ENCODE measurements at regions of chr6 and their contacts with region 1.

Region 1: DNA sequence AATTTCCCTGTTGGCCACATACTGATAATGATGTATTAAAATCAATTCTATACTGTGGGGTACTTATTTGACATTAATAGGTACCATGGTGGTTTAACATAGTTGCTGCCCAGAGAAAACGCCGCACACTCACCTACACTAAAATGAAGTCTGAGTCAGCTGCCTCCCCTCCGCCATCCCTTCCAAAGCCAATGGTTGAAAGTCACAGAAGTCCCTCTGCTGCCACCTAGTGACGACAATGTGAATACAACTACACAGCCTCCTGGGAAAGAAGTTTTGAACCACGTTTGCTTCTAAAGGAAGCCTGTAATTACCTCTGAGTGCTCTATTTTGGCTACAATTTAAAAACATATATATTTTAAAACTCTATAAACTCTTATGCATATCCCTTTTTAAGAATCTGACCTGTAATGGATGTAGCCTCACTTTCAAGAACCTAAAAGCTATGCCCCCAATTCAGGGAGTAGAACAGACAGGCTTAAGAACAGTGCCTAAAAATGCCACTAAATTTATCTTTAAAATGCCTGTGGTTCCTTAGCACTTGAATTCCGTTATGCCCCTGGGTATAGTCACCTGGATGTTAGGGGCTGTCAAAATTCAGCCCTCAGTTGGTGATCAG is 20.6 kb upstream of the ECI2 start:
- DNase-seq: no peak

Region 2: DNA sequence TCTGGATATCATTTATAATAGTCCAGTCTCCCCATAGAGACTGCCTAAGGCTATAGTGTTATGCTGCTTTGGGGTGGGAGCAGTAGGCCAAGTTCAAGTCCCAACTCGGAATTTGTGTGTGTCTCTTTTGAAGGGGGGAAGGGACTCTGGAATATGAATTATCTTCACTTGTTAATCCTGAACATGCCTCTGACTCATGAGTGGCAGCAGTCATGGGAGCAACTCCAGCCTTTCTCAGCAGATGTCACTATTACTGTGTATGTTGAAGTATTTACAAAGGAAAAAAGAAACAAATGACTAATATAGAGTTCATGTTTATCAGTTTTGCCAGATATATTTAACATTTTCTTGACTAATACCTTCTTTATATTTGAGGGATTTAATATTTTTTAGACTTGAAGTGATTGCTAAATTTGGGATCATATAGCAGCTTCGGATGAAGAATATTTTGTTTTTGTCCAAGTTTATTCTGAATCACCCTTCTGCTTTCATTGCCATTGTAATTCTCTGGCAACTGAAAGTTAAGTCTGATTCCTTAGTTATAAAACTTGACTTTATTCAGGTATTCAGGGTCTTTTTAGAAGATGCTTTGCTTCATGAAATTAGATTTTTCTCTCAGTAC is 100.4 kb before region 1 on chr6:
- intact Hi-C with region 1: loop called (anchors 5 kb)
- DNase-seq: no peak